HepG2 (cell line): ENCODE measurements at regions of chr17 and their contacts with region 1.

Region 1: GRCh38 chr17:47978324-47978723 is 7.4 kb downstream of the CDK5RAP3 start:
- DNase-seq: peak; percentile 51
- ATAC-seq: peak; percentile 89
- H3K4me3 ChIP-seq: no peak overlapping the region
- H3K27ac ChIP-seq: no peak overlapping the region
- H3K4me1 ChIP-seq: no peaks in the 10 kb centered on the region
- H3K27me3 ChIP-seq: no peaks in the 10 kb centered on the region
- CTCF ChIP-seq: peak; percentile 87
- EP300 ChIP-seq: no peak
- POLR2A ChIP-seq: no peak
- RAD21 ChIP-seq: peak; percentile 81

Region 2: GRCh38 chr17:47949136-47949759 is 29.1 kb before region 1 on chr17:
- CTCF ChIA-PET with region 1: interaction called, 12 read pairs
- POLR2A ChIA-PET with region 1: interaction called, 267 read pairs
- in situ Hi-C with region 1: no loop called
- intact Hi-C with region 1: no loop called
- DNase-seq: peak; percentile 80
- ATAC-seq: peak; percentile 78
- H3K4me3 ChIP-seq: peak overlapping the region; percentile 18 to 43 (median 28); a peak in 5 of 6 replicates
- H3K27ac ChIP-seq: peak overlapping the region; percentile 76
- H3K4me1 ChIP-seq: peaks cover 91% of the 10 kb centered on the region
- H3K27me3 ChIP-seq: no peaks in the 10 kb centered on the region
- CTCF ChIP-seq: peak; percentile 98
- EP300 ChIP-seq: peak in 1 of 2 experiments; percentile 37; a peak in 1 of 4 replicates
- POLR2A ChIP-seq: no peak; a peak in 1 of 4 replicates
- RAD21 ChIP-seq: peak; percentile 97

Region 3: DNA sequence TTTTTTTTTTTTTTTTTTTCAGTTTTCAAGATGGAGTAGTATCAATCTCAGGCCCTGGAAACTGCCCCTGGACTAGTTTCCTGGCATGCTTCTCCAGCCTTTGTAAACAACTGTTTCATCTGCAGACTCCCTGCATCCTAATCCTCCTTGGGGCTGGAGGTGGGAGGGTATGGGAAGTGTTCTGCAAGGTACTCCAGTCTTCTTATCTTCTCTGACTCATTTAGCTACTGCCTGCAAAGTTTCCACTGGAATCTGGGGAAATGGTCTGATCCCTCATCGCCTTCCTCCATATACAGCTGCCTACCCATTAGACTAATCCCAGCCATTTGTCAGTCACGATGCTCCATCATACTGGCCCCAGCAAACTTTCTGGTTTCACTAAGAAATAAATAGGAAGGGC is 37.8 kb after region 1 on chr17:
- CTCF ChIA-PET with region 1: interaction called, 17 read pairs
- POLR2A ChIA-PET with region 1: no interaction called
- in situ Hi-C with region 1: loop called (anchors 5 kb)
- intact Hi-C with region 1: loop called (anchors 1 kb)
- DNase-seq: no peak
- ATAC-seq: no peak
- H3K4me3 ChIP-seq: no peak overlapping the region
- H3K27ac ChIP-seq: no peak overlapping the region
- H3K4me1 ChIP-seq: peaks cover 11% of the 10 kb centered on the region
- H3K27me3 ChIP-seq: peaks cover 10 to 49% of the 10 kb centered on the region in 2 experiments; a peak in 4 of 5 replicates
- CTCF ChIP-seq: no peak
- EP300 ChIP-seq: no peak
- POLR2A ChIP-seq: no peak
- RAD21 ChIP-seq: no peak

Region 4: DNA sequence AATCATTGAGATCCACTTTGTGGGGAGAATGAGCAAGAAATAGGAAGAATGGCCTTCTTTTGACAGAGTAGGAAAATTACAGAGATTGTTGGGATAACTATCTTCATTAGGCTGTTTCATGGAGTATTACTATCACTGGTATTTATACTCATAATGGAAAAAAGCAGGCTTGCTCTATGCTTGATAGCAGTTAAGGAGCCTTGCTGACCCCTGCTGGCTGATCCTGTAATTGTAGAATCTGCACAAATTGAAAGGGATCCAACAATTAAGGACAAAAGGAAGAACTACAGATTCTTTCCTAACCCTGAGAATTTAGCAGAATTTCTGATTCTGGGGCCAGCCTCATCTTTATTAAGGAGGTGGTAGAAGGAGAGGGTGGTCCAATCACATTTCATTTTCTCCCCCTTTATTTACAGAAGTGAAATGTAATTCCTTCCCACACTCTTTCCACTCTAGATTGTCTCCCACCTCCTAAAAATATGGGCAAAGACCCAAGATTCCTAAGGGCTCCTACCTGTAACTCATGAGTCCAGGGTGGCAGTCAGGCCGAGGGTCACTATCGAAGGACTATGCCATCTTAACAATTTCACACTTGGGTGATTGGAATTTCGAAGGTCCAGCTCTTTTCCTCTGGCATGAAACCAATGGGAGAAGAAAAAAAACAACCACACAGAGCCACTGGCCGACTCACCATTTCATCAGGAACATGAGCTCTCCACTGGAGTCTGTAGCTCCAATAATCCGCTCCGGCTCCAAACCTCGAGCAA is 96.2 kb after region 1 on chr17:
- CTCF ChIA-PET with region 1: no interaction called
- POLR2A ChIA-PET with region 1: no interaction called
- in situ Hi-C with region 1: no loop called
- intact Hi-C with region 1: no loop called
- DNase-seq: peak; percentile 75
- ATAC-seq: peak; percentile 86
- H3K4me3 ChIP-seq: no peak overlapping the region
- H3K27ac ChIP-seq: no peak overlapping the region
- H3K4me1 ChIP-seq: 0 out of 2 replicates have a peak, but pooled peaks cover 8% of the 10 kb centered on the region
- H3K27me3 ChIP-seq: no peaks in the 10 kb centered on the region
- CTCF ChIP-seq: peak; percentile 87
- EP300 ChIP-seq: no peak
- POLR2A ChIP-seq: no peak
- RAD21 ChIP-seq: peak; percentile 89